Calu3 (cell line): ENCODE measurements at regions of chr7 and their contacts with region 1.

Region 1: DNA sequence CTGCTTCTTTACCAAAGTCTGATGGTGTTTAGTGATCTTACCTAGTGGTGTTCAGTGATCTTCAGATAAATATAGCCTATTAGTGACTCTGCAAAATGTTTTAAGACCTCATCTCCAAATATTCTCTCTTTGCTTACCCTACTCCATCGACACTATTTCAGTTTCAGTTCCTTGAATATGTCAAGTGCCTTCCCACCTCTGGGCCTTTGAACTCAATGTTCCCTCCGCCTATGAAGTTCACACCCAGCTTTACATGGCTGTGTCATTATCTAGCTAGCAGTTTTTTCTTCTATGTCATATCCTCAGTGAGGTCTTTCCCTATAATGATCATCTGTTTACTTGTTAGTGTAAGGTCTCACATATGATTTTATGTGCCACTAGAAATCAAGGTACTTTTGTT is 322.6 kb downstream of the DGKB start:
- DNase-seq: no peak
- H3K4me3 Mint-ChIP-seq: no peak overlapping the region
- H3K27ac Mint-ChIP-seq: no peak overlapping the region
- H3K4me1 Mint-ChIP-seq: peaks cover 10% of the 10 kb centered on the region
- H3K27me3 Mint-ChIP-seq: no peaks in the 10 kb centered on the region
- CTCF ChIP-seq: no peak

Region 2: DNA sequence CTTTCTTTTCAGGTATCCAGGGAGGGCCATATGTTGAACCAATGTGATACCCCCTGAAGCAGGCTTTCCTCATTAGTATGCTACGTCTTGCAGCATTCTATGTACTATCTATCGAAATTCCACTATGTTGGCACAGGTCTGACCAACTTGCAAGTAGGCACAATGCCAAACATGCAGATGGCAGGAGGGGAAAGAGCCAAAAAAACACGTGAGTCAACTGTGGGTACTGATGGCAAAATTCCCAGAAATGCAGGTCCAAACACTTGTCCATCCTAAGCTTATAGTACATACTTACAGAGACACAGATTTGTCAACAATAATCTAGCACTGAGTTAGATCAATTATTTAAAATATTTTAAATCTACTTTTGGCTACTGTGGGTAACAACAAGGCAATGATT is 72.4 kb before region 1 on chr7:
- CTCF ChIA-PET with region 1: no interaction called
- intact Hi-C with region 1: loop called (anchors 5 kb)
- DNase-seq: peak; percentile 64
- H3K4me3 Mint-ChIP-seq: no peak overlapping the region
- H3K27ac Mint-ChIP-seq: peak overlapping the region; percentile 31
- H3K4me1 Mint-ChIP-seq: peaks cover 31% of the 10 kb centered on the region
- H3K27me3 Mint-ChIP-seq: no peaks in the 10 kb centered on the region
- CTCF ChIP-seq: no peak